HEK293 (cell line): ENCODE measurements at regions of chr17 and their contacts with region 1.

Region 1: DNA sequence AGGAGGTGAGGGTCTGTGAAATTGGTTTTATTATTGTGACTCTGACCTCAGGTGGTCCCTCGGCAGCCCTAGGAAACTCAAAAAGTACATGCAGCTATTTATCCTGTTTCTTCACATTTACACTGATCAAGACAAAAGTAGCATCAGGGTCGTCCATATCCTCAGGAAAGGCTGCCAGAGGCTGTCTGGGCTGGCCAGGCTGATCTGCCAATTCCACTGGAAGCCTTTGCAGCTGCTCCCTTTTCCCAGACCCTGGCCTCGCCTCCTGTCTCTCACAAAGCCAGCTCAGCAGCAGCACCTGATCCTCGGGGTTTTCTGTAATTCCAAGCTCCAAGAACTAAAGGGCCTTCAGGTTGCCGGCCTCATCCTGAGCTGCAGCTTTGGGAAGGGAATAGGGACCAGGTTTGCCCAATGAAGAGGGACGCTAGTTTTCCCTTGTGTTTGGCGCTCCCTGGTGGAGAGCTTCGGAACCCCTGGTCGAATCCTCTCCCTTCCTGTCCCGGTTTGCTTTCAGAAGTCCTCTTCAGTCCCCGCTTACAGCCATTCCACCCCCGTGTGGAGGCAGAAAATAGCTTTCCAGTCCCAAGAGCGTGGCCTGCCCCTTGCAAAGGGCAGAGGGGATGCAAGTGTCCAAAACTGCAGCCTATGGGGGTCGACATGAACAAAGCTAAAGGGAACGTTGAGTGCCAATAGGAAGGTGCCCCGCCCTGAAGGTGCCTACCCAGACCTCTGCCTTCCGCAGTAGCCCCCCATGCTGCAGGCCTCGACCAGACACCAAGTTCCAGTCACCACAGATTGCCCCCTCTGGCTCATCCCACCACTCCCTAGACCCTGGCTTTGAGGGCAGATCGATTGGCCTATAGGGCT is 13.4 kb downstream of the MFSD6L start:
- H3K4me3 ChIP-seq: no peak overlapping the region
- H3K27ac ChIP-seq: no peak overlapping the region
- H3K4me1 ChIP-seq: no peaks in the 10 kb centered on the region
- CTCF ChIP-seq: peak; percentile 75

Region 2: GRCh38 chr17:8383143-8383822 is 402.5 kb before region 1 on chr17 and contains the start of gene RPL26:
- CTCF ChIA-PET with region 1: interaction called, 20 read pairs
- POLR2A ChIA-PET with region 1: interaction called, 7 read pairs
- H3K4me3 ChIP-seq: peak within 1 kb of the TSS; percentile 90
- H3K27ac ChIP-seq: peak within 1 kb of the TSS; percentile 97
- H3K4me1 ChIP-seq: peaks cover 13% of the 10 kb centered on the region
- CTCF ChIP-seq: peak; percentile 98

Region 3: DNA sequence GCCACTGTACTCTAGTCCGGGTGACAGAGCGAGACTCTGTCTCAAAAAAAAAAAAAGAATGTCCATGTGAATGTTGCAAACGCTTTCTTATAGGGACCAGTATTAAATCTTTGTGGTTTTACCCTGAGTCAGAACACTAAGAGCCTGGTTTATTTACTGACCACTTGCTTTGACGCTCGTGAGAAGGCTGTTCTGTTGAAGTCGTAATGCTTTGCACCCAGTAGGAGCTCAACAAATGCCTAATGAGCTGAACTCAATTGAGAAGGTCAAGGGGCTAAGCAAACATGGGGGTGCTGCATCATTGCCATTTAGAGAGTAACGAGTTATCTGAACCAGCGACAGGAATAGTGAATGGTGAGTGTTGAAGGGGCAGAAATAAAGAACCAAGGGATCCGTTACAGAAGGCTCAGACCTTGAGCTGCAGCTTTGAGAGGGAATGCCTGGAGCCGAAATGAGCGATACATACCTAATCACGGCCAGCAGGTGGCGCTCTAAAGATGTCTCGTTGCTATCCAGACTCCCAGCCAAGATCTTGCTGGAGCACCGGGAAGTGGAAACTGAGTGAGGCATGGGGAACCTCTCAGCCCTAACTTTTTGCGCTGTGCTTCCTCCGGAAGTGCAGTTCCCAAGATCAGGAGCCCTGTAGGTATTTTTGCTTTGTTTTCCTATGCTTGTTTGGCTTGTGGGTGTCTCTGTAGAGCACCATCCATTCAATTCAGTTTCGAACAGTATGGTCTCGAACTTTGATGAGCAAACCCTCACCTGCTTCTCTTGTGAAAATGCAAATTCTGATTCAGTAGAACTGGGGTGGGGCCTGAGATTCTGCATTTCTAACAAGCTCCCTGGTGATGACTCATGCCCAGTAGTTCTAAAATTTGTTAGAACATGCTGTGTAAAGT is 375.6 kb before region 1 on chr17:
- CTCF ChIA-PET with region 1: interaction called, 11 read pairs
- POLR2A ChIA-PET with region 1: no interaction called
- H3K4me3 ChIP-seq: no peak overlapping the region
- H3K27ac ChIP-seq: no peak overlapping the region
- H3K4me1 ChIP-seq: no peaks in the 10 kb centered on the region
- CTCF ChIP-seq: peak; percentile 71

Region 4: GRCh38 chr17:8745586-8746500 is 39.9 kb before region 1 on chr17:
- CTCF ChIA-PET with region 1: interaction called, 14 read pairs
- POLR2A ChIA-PET with region 1: no interaction called
- H3K4me3 ChIP-seq: peak overlapping the region; percentile 60
- H3K27ac ChIP-seq: no peak overlapping the region
- H3K4me1 ChIP-seq: no peaks in the 10 kb centered on the region
- CTCF ChIP-seq: peak; percentile 90

Region 5: GRCh38 chr17:8755590-8756255 is 30.1 kb before region 1 on chr17:
- CTCF ChIA-PET with region 1: interaction called, 13 read pairs
- POLR2A ChIA-PET with region 1: no interaction called
- H3K4me3 ChIP-seq: no peak overlapping the region
- H3K27ac ChIP-seq: no peak overlapping the region
- H3K4me1 ChIP-seq: no peaks in the 10 kb centered on the region
- CTCF ChIP-seq: no peak

Region 6: GRCh38 chr17:8766731-8767130 is 19.0 kb before region 1 on chr17:
- CTCF ChIA-PET with region 1: interaction called, 72 read pairs
- POLR2A ChIA-PET with region 1: no interaction called
- H3K4me3 ChIP-seq: no peak overlapping the region
- H3K27ac ChIP-seq: no peak overlapping the region
- H3K4me1 ChIP-seq: no peaks in the 10 kb centered on the region
- CTCF ChIP-seq: no peak

Region 7: GRCh38 chr17:8874216-8874615 is 88.4 kb after region 1 on chr17:
- CTCF ChIA-PET with region 1: no interaction called
- POLR2A ChIA-PET with region 1: no interaction called
- H3K4me3 ChIP-seq: no peak overlapping the region
- H3K27ac ChIP-seq: no peak overlapping the region
- H3K4me1 ChIP-seq: no peaks in the 10 kb centered on the region
- CTCF ChIP-seq: no peak

Region 8: GRCh38 chr17:8894673-8895578 is 109.1 kb after region 1 on chr17:
- CTCF ChIA-PET with region 1: interaction called, 19 read pairs
- POLR2A ChIA-PET with region 1: no interaction called
- H3K4me3 ChIP-seq: no peak overlapping the region
- H3K27ac ChIP-seq: no peak overlapping the region
- H3K4me1 ChIP-seq: no peaks in the 10 kb centered on the region
- CTCF ChIP-seq: peak; percentile 68